HEK293T (cell line): ENCODE measurements at regions of chr3 and their contacts with region 1.

Region 1: DNA sequence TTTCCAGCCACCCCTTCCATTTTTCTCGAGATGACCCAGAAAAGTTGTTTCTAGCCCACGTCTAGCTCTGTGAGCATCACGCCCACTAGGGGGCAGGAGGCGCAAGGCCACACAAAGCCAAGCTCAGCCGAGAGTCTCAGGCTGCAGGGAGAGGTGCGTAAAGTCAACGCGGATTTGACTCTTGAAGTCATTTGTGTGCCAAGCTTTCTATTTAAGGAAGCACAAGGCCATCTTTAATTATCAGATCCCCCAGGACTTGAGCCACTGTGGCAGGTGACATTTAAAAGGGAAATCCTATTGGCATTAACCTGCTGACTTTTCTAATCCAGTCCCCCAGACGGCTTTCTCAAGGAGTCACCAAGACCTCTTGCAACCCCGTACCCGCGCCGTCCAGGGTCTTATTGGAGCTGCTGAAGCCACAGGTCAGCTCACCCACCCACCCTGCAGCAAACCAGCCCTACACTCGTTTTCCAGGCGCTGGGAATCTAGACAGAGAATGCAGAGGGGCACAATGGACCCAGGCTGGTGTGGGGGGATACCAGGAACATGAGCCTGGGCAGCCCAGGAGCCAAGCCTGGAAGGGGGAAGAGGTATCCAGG is 62.1 kb downstream of the CAPN7 start:
- DNase-seq: peak; percentile 83

Region 2: GRCh38 chr3:15279671-15280408 is 11.7 kb after region 1 on chr3:
- CTCF ChIA-PET with region 1: interaction called, 10 read pairs
- POLR2A ChIA-PET with region 1: no interaction called
- DNase-seq: no peak

Region 3: DNA sequence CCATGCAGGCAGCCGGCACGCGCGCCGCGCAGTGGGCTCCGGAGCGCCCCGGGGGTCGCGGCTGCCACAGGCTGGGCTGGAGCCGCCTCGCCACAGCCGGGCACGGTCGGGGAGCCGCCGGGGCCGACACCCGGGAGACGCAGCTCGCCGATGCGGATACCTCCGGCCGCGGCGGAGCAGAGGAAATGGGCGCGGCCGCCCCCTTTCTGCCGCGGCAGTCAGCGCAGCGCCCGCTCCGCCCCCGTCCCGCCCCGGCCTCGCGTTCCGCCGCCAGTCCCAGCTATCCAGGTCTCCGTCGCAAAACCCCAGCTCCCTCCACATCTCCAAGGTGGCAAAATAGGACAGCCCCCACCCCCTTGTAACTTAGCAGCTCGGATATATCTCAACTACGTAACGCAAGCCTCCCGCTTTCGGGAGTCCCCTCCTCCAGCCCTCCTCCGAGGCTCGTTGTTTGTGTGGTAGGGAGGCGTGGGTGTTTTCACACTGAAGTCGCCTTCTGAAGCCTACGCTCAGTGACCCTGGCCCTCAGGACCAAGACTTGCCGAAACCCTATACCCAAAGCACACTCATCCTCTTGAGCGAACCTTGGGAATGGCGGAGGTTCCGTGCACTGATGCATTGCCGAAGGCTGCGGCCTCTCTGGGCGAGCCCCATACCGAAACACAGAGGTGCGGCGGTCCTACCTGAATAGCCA is 64.4 kb after region 1 on chr3 and contains the start of gene SH3BP5:
- CTCF ChIA-PET with region 1: interaction called, 12 read pairs
- POLR2A ChIA-PET with region 1: interaction called, 3 read pairs
- DNase-seq: peak; percentile 85